ENCODE measurements at regions of chr4 and their contacts with region 1.

Region 1: DNA sequence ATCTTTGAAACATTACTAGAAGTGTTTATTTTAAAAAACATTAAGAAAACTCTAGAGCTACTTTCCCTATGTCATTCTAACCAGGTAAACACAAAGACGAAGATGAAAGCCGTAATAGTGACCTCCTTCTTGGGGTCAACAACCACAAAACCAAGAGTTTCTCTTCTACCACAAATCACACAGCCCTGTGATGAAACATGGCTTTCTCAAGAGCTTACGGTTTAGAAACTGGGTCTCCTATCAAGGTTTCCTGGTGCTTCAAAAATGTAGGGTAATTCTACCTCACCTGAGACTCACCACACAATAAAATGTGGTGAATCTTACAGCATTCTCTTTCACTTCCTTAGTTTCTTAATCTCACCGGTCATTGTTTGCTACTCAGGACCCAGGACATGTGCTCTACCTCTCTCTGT is 50.9 kb downstream of the CORIN start:
- DNase-seq: no peak
- ATAC-seq: no peak
- H3K4me3 ChIP-seq: no peak overlapping the region
- H3K4me3 Mint-ChIP-seq: no peak overlapping the region
- H3K27ac ChIP-seq: no peak overlapping the region
- H3K27ac Mint-ChIP-seq: no peak overlapping the region
- H3K4me1 ChIP-seq: no peaks in the 10 kb centered on the region
- H3K4me1 Mint-ChIP-seq: no peaks in the 10 kb centered on the region
- H3K27me3 ChIP-seq: no peaks in the 10 kb centered on the region
- H3K27me3 Mint-ChIP-seq: peaks cover 0 to 8% of the 10 kb centered on the region in 2 donors

Region 2: DNA sequence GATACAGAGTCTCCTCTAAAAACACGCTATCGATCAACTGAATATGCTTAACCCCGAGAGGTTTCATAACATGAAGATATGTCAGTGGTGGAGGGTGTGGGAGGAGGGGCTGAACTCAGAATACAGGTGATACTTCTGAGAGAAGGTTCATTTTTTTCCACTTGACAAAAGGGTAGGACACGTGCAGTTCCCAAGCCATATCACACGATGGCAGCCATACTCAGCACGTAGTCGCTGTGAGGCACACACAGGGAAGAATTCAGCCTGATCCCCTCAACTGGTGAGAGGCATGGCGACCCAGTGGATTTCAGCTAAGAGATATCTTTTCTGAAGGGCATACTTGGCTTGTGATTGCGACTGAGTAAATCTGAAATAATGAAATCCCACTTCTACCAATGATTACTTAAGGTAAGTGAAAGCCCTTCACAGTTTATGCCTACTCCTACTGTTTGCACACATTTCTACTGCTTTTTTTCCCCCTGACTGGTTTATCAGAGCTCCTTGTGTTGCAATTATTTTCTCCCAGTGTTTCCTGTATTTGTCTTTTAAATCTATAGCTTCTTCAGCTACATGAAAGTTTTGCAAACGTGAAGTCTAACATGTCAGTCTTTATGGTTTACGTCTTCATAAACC is 82.2 kb before region 1 on chr4:
- CTCF ChIA-PET with region 1: no interaction called
- POLR2A ChIA-PET with region 1: interaction called in 1 of 2 experiments, 10 read pairs
- DNase-seq: peak in 3 of 35 experiments; percentile 1 to 24 (median 1)
- ATAC-seq: peak in 2 of 4 experiments; percentile 48 to 56
- H3K4me3 ChIP-seq: no peak overlapping the region
- H3K4me3 Mint-ChIP-seq: no peak overlapping the region
- H3K27ac ChIP-seq: no peak overlapping the region
- H3K27ac Mint-ChIP-seq: no peak overlapping the region
- H3K4me1 ChIP-seq: no peaks in the 10 kb centered on the region
- H3K4me1 Mint-ChIP-seq: peaks cover 0 to 3% (median 0%) of the 10 kb centered on the region in 3 donors
- H3K27me3 ChIP-seq: peaks cover 0 to 3% of the 10 kb centered on the region in 2 experiments
- H3K27me3 Mint-ChIP-seq: peaks cover 13 to 16% of the 10 kb centered on the region in 2 donors

Region 3: DNA sequence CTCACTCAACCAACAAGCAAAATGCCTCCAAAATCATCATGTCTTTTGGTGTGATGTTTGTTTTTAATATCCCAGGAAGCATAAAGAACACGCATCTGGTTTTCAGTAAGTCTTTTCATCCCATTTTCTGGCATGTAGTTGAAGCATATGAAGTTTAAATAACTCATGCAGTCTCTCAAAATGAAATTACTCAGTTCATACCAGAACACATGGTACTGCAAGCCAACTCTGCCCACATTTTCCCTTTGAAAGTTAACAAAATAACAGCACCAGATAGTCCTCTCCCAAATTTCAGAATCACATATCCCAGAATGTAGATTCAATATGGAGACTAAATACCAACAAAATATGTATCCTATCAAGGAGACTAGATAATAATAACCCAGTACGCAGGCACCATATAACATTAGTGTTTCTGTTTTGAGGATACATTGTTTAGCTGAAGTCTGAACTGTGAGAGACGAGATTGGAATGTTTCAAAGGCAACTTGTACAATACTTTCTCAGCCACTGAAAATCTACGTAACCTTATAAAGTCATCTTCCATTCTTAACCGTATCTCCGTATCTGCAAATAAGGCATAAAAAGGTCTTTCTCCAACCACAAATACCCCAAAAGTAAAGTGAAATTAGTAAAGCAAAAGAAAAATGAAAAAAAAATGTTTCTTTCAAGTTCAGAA is 27.8 kb after region 1 on chr4:
- CTCF ChIA-PET with region 1: no interaction called
- POLR2A ChIA-PET with region 1: no interaction called
- DNase-seq: no peak
- ATAC-seq: no peak
- H3K4me3 ChIP-seq: no peak overlapping the region
- H3K4me3 Mint-ChIP-seq: no peak overlapping the region
- H3K27ac ChIP-seq: no peak overlapping the region
- H3K27ac Mint-ChIP-seq: no peak overlapping the region
- H3K4me1 ChIP-seq: no peaks in the 10 kb centered on the region
- H3K4me1 Mint-ChIP-seq: peaks cover 0 to 5% (median 4%) of the 10 kb centered on the region in 3 donors
- H3K27me3 ChIP-seq: no peaks in the 10 kb centered on the region
- H3K27me3 Mint-ChIP-seq: peaks cover 23 to 31% of the 10 kb centered on the region in 2 donors

Region 4: DNA sequence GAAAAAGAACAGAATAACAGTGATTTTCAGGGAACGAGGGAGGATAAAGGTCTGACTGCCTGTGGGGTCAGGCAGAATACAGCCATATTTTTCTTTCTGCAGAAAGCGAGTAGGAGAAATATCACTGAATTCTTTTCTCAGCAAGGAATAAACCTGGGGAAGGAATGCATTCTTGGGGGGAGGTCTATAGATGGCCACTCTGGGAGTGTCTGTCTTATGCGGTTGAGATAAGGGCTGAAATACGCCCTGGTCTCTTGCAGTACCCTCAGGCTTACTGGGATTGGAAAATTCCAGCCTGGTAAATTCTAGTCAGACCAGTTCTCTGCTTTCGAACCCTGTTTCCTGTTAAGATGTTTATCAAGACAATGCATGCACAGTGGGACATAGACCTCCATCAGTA is 203.2 kb after region 1 on chr4:
- CTCF ChIA-PET with region 1: no interaction called
- POLR2A ChIA-PET with region 1: no interaction called
- DNase-seq: no peak
- ATAC-seq: no peak
- H3K4me3 ChIP-seq: no peak overlapping the region
- H3K4me3 Mint-ChIP-seq: no peak overlapping the region
- H3K27ac ChIP-seq: no peak overlapping the region
- H3K27ac Mint-ChIP-seq: no peak overlapping the region
- H3K4me1 ChIP-seq: no peaks in the 10 kb centered on the region
- H3K4me1 Mint-ChIP-seq: peaks cover 7 to 19% (median 13%) of the 10 kb centered on the region in 3 donors
- H3K27me3 ChIP-seq: no peaks in the 10 kb centered on the region
- H3K27me3 Mint-ChIP-seq: peaks cover 6 to 11% of the 10 kb centered on the region in 2 donors